CD4-positive, alpha-beta memory T cell (primary cell): ENCODE measurements at regions of chr22 and their contacts with region 1.

Region 1: GRCh38 chr22:20393909-20394691 is at the start of gene ZNF74:
- DNase-seq: peak; percentile 86 to 91 (median 87)
- H3K4me3 ChIP-seq: peak within 1 kb of the TSS; percentile 66 to 75
- H3K4me3 Mint-ChIP-seq: peak within 1 kb of the TSS; percentile 86 to 95 (median 89)
- H3K27ac ChIP-seq: peak within 1 kb of the TSS; percentile 62
- H3K27ac Mint-ChIP-seq: peak within 1 kb of the TSS; percentile 76 to 96 (median 91)
- H3K4me1 ChIP-seq: peaks cover 24% of the 10 kb centered on the region
- H3K4me1 Mint-ChIP-seq: peaks cover 18 to 46% (median 30%) of the 10 kb centered on the region in 4 donors
- H3K27me3 ChIP-seq: no peaks in the 10 kb centered on the region
- H3K27me3 Mint-ChIP-seq: no peaks in the 10 kb centered on the region
- total RNA-seq, gene ZNF74: 16.5 to 17.4 TPM

Region 2: DNA sequence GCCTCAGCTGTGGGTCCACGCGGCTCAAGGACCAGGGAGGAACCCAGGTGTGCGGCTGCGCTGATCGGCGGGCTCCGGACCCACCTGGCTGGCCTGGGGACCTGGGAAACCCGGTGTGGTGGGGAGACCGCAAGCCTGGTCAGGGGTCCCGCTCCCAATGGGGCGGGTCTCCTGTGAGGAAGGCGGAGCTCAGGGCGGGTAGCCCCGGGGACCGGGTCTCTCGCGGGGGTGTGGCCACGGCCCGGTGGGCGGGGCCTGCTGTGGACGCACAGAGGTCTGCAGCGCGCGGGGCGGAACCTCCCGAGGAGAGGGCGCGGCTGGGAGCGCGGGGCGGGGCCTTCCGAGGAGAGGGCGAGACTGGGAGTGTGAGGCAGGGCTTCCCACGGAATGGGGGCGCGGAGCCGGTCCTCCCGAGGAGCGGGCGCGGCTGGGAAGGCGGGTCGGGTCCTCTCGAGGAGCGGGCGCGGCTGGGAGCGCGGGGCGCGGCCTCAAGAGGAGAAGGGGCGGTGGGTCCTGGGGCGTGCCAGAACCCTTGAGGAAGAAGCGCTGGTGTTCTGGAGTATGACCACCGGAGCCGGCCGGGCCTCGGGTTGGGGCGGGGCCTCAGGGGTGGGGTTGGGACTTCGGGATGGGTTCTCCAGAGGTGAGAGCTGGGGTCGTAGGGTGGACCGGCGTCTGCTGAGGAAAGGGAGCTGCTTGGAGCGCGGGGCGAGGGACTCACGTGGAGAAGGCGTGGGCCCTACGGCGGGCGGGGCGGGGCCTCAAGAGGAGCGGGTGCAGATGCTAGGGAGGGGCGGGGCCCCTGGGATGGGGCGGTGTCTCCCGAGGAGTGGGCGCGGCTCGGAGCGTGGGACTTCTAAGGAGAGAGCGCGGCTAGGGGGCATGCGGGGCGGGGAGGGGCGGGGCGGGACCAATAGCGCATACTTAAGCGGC is 95.0 kb before region 1 on chr22:
- CTCF ChIA-PET with region 1: no interaction called
- POLR2A ChIA-PET with region 1: interaction called, 6 read pairs
- intact Hi-C with region 1: loop called (anchors 1 kb)
- DNase-seq: peak; percentile 88 to 93 (median 91)
- H3K4me3 ChIP-seq: peak overlapping the region in 1 of 2 donors; percentile 62
- H3K4me3 Mint-ChIP-seq: peak overlapping the region; percentile 81 to 89 (median 84)
- H3K27ac ChIP-seq: peak overlapping the region; percentile 25
- H3K27ac Mint-ChIP-seq: peak overlapping the region in 6 of 7 donors; percentile 65 to 95 (median 82)
- H3K4me1 ChIP-seq: peaks cover 6% of the 10 kb centered on the region
- H3K4me1 Mint-ChIP-seq: peaks cover 2 to 10% (median 8%) of the 10 kb centered on the region in 4 donors
- H3K27me3 ChIP-seq: no peaks in the 10 kb centered on the region
- H3K27me3 Mint-ChIP-seq: peaks cover 0 to 3% of the 10 kb centered on the region in 2 donors

Region 3: DNA sequence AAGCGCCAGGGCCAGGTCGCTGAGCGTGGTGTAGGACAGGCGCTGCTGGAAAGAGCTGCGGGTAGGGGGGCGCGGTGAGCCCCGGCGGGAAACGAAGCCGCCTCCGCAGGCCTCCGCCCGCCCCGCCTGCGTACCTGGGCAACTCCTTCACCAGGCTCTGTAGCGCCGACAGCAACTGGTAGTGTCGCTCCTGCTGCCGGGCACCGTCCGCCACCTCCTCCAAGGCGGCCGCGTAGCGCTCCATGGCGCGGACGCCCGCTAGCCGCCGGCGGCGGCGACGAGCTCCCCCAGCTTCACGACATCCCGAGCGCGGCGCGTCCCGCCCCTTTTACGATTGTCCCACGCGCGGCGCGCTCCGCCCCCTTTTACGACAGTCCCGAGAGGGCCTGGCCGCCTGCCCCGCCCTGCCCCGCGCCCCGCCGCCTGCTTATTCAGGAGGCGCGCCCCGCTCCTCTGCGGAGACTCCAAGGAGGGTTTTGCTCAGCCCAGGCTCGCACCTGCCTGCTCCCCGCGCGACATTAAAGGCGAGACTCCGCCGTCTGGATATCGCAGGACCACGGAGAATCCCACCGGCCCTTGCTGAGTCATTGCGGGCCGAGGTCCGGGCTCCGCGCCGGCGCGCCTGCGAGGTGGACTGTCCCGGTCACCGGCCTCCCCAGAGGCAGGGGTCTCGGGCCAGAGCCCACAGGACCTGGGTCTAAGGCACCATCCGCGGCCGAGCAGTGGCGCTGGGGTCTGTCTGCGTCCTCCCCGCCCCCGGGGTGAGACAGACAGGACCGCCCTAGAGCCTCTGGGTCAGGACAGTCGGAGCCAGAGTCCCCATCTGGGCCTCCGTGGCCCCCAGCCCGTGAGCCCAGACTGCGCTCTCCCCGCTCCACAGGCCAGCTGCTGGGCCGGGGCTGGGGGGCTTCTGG is 74.1 kb before region 1 on chr22 and contains the start of gene DGCR6L:
- CTCF ChIA-PET with region 1: interaction called, 4 read pairs
- POLR2A ChIA-PET with region 1: interaction called, 18 read pairs
- intact Hi-C with region 1: loop called (anchors 1 kb)
- DNase-seq: peak; percentile 95 to 97 (median 96)
- H3K4me3 ChIP-seq: peak within 1 kb of the TSS; percentile 82 to 92
- H3K4me3 Mint-ChIP-seq: peak within 1 kb of the TSS; percentile 89 to 95 (median 91)
- H3K27ac ChIP-seq: peak within 1 kb of the TSS; percentile 81
- H3K27ac Mint-ChIP-seq: peak within 1 kb of the TSS; percentile 84 to 97 (median 91)
- H3K4me1 ChIP-seq: peaks cover 58% of the 10 kb centered on the region
- H3K4me1 Mint-ChIP-seq: peaks cover 35 to 70% (median 53%) of the 10 kb centered on the region in 4 donors
- H3K27me3 ChIP-seq: no peaks in the 10 kb centered on the region
- H3K27me3 Mint-ChIP-seq: no peaks in the 10 kb centered on the region
- total RNA-seq, gene DGCR6L: 39.9 to 44.6 TPM

Region 4: GRCh38 chr22:20858615-20859416 is 464.7 kb after region 1 on chr22 and contains the starts of genes PI4KA and SNAP29:
- CTCF ChIA-PET with region 1: no interaction called
- POLR2A ChIA-PET with region 1: no interaction called
- intact Hi-C with region 1: loop called (anchors 5 kb)
- DNase-seq: peak; percentile 97 to 98 (median 98)
- H3K4me3 ChIP-seq: peak within 1 kb of the TSS; percentile 19 to 80
- H3K4me3 Mint-ChIP-seq: peak within 1 kb of the TSS; percentile 85 to 95 (median 88)
- H3K27ac ChIP-seq: peak within 1 kb of the TSS; percentile 79
- H3K27ac Mint-ChIP-seq: peak within 1 kb of the TSS; percentile 85 to 94 (median 92)
- H3K4me1 ChIP-seq: peaks cover 63% of the 10 kb centered on the region
- H3K4me1 Mint-ChIP-seq: peaks cover 33 to 80% (median 61%) of the 10 kb centered on the region in 4 donors
- H3K27me3 ChIP-seq: no peaks in the 10 kb centered on the region
- H3K27me3 Mint-ChIP-seq: no peaks in the 10 kb centered on the region
- total RNA-seq, gene PI4KA: 142 to 145 TPM
- total RNA-seq, gene SNAP29: 24.4 to 26.1 TPM